PC-9 (cell line): ENCODE measurements at regions of chr5 and their contacts with region 1.

Region 1: DNA sequence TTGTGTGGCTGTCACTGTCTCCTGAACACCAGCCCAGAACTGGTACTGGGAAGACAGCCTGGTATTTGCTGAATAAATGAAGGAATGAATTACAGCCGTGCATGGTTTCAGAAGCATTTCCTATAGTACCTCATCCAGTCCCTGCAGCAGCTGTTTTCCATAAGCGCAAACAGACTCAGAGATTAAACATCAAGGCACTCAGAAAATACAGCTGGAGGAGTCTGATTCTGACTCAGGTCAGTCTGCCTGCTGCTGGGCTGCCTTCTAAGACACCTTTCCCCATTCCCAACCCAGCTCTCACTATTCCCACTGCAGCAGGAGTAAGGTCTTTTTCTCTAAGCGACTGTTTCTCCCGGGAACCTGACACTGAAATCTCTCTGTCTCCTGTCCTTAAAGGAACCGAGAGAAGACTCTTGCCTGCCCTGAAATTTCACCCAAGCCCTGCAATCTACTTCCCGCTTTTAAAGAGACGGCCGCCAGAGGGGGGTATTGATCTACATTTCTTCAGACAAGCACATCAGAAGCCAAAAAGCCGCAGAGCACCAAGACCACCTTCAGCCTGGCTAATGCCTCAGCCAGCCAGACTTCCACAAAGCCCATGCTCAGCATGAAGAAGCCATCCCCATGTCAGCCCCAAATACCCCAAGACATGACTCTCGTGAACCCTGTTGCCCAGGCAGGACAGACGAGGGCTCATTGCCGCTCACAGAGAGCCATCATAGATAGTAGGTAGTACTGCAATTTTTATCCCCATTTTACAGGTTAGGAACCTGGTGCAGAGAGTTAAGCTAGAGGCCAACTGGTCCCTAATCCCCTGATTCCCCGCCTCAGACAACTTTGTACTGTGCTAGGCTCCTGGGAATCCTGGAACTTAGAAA is 5.4 kb upstream of the FOXI1 start:
- DNase-seq: peak; percentile 69 to 81
- H3K4me3 ChIP-seq: no peak overlapping the region
- H3K27ac ChIP-seq: peak overlapping the region; percentile 31; the same call in 1 of the 2 replicates
- H3K4me1 ChIP-seq: peaks cover 41% of the 10 kb centered on the region
- H3K27me3 ChIP-seq: no peaks in the 10 kb centered on the region
- CTCF ChIP-seq: peak; percentile 93

Region 2: DNA sequence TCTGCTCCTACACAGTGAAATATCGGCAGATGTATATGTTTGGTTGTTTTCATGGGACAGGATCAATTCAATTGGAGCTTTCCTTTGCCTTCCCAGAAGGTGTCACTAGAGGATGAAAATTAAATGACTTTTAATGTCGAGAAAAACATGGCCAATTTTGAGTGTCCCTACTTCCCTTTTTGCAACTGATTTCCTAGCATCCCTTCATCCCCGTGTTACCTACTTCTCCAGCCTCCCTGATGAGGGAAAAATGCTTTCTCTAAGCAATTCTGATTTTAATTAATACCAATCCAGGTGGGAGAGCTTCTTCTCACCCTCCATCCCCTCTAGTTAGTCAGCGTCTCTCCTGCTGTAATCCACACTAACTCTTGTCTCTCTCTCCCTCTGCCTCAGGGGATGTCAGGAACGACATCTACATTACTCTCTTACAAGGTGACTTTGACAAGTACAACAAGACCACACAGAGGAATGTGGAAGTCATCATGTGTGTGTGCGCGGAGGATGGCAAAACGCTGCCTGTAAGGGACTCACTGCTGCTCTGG is 398.3 kb before region 1 on chr5:
- CTCF ChIA-PET with region 1: no interaction called
- POLR2A ChIA-PET with region 1: no interaction called
- intact Hi-C with region 1: loop called (anchors 5 kb)
- DNase-seq: peak in 1 of 2 experiments; percentile 56
- H3K4me3 ChIP-seq: no peak overlapping the region
- H3K27ac ChIP-seq: no peak overlapping the region
- H3K4me1 ChIP-seq: peaks cover 11% of the 10 kb centered on the region
- H3K27me3 ChIP-seq: no peaks in the 10 kb centered on the region
- CTCF ChIP-seq: peak; percentile 65; the same call in 1 of the 2 replicates

Region 3: DNA sequence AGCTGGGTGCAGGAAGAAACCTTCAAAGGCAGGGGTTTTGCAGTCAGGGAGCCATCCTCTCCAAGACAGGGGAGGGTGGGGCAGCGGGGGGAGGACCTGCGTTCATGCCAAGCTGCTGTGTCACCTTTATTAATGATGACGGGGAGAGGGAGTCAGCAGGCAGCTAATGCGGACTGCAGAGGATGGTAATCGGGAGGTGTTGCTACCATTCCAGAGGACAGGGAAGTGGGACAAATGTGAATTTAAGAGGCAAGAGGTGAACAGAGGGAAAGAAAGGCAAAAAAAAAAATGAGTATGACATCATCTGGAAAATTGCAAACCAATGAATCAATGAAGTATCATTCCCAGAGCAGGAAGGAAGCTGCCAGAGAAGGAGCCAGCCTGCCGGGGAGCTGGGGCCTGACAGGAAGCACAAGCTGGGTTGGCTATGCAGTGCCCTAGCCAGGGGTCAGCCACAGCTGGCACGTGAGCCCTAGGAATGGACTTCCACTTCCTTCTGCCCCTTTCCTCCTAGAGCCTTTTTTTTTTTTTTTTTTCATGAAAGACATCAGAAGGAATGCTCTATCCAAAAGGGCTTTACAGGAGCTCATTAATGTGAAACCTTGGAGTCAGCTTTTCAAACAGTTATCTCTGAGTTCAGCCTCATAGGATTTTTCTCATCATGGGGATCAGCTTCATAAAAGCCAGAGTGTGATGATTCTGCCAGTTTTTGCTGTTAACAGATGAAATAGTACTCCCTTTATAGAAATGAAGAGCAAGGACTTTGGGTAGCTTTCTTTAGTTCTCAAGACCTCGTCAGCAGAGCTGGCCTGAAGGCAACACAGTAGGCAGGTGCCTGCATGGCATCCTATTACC is 129.2 kb before region 1 on chr5:
- CTCF ChIA-PET with region 1: no interaction called
- POLR2A ChIA-PET with region 1: no interaction called
- intact Hi-C with region 1: loop called (anchors 5 kb)
- DNase-seq: peak; percentile 76 to 98
- H3K4me3 ChIP-seq: no peak overlapping the region
- H3K27ac ChIP-seq: peak overlapping the region; percentile 88
- H3K4me1 ChIP-seq: peaks cover 29% of the 10 kb centered on the region
- H3K27me3 ChIP-seq: no peaks in the 10 kb centered on the region
- CTCF ChIP-seq: no peak

Region 4: GRCh38 chr5:170080217-170080616 is 20.1 kb before region 1 on chr5:
- CTCF ChIA-PET with region 1: no interaction called
- POLR2A ChIA-PET with region 1: no interaction called
- intact Hi-C with region 1: no loop called
- DNase-seq: no peak
- H3K4me3 ChIP-seq: no peak overlapping the region
- H3K27ac ChIP-seq: no peak overlapping the region
- H3K4me1 ChIP-seq: no peaks in the 10 kb centered on the region
- H3K27me3 ChIP-seq: no peaks in the 10 kb centered on the region
- CTCF ChIP-seq: no peak

Region 5: DNA sequence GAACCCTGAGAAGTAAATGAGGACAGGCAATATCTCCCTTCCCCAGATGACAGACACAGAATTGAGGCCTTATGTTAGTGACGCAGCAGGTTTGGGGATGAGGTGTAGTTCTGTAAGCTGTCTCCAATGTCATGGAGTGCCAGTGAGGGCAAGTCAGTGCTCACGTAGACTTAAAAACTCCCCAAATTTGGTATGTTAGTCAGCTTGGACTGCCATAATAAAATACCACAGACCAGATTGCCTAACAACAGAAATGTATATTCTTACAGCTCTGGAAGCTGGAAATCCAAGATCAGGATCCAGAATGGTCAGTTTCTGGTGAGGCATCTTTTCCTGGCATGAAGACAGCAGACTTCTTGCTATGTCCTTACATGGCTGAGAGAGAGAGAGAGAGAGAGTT is 20.3 kb after region 1 on chr5:
- CTCF ChIA-PET with region 1: no interaction called
- POLR2A ChIA-PET with region 1: no interaction called
- intact Hi-C with region 1: no loop called
- DNase-seq: peak; percentile 18 to 76
- H3K4me3 ChIP-seq: no peak overlapping the region
- H3K27ac ChIP-seq: peak overlapping the region; percentile 66
- H3K4me1 ChIP-seq: peaks cover 23% of the 10 kb centered on the region
- H3K27me3 ChIP-seq: no peaks in the 10 kb centered on the region
- CTCF ChIP-seq: no peak

Region 6: DNA sequence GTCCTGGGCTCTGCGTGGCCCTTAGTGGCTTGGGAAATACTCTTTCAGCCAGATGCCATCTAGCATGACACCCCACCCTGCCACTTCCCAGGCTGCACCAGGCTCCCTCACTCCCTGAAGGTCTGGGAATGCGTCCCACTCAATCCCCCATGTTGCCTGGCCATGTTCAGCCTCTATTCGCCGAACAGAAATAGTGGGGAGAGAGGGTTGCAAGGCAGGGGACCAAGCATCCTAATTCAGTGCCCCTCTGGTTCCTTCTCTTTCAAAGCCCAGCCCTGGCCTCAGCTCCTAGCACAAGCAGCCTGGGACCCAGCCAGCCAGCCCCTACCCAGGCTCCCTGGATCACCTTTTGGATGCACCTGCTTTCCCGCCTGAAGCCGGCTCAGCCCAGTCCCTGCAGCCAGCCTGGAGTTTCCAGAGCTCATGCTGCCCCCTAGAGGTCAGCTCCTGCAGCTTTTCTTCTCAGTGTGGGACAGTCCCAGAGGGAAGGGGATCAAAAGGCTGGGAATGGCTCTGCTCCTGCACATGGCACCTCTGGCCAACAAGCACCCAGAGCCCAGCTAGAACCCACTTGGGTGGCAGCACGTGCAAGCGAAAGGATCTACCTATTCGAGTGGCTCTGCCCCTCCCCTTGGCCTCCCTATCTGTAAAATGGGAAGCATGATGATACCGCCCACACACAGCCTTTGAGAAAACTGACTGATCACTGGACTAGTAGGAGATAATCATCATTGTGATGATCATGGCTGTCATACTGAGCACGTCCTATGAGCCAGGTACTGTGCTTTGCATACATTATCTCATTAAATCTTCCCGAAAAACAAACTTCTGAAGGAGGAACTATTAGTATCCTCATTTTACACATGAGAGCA is 83.7 kb after region 1 on chr5:
- CTCF ChIA-PET with region 1: interaction called, 5 read pairs
- POLR2A ChIA-PET with region 1: no interaction called
- intact Hi-C with region 1: loop called (anchors 1 kb)
- DNase-seq: peak in 1 of 2 experiments; percentile 80
- H3K4me3 ChIP-seq: no peak overlapping the region
- H3K27ac ChIP-seq: no peak overlapping the region
- H3K4me1 ChIP-seq: peaks cover 21% of the 10 kb centered on the region
- H3K27me3 ChIP-seq: no peaks in the 10 kb centered on the region
- CTCF ChIP-seq: peak; percentile 93

Region 7: DNA sequence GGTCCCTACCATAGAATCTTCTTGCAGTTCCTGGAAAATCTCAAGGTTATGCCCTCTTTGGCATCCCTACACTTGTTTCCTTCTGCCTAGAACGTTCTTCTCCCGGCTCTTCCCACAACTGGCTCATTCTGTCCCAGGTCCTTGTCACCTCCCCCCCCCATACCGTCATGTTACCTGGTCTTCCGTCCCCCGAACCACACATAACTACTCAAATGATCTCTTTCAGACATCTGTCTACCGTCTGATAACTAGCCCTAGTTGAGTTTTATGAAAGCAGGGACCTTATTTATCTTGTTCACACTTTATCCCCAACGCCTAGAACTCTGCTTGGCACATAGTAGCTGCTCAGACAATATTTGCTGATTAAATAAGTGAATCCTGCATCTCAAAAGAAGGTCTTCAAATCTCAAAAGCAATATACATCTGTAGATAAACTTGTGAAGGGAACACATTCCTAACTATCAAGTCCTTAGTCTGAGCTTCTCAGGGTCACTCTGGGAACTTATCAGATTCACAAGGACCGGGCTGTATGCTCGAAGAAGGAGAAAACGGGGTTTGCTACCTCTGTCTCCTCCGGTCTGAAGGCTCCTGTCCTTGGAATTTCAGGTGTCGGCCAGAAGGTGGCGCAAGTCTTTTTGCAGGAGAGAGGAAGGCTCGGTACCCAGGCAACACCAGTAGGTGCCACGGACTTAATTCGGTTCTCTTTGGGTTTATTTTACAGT is 167.3 kb after region 1 on chr5:
- CTCF ChIA-PET with region 1: no interaction called
- POLR2A ChIA-PET with region 1: no interaction called
- intact Hi-C with region 1: loop called (anchors 5 kb)
- DNase-seq: peak; percentile 45 to 52
- H3K4me3 ChIP-seq: peak overlapping the region; percentile 50; the same call in 1 of the 2 replicates
- H3K27ac ChIP-seq: no peak overlapping the region
- H3K4me1 ChIP-seq: no peaks in the 10 kb centered on the region
- H3K27me3 ChIP-seq: peaks cover 24% of the 10 kb centered on the region; the same call in 1 of the 2 replicates
- CTCF ChIP-seq: peak; percentile 90

Region 8: DNA sequence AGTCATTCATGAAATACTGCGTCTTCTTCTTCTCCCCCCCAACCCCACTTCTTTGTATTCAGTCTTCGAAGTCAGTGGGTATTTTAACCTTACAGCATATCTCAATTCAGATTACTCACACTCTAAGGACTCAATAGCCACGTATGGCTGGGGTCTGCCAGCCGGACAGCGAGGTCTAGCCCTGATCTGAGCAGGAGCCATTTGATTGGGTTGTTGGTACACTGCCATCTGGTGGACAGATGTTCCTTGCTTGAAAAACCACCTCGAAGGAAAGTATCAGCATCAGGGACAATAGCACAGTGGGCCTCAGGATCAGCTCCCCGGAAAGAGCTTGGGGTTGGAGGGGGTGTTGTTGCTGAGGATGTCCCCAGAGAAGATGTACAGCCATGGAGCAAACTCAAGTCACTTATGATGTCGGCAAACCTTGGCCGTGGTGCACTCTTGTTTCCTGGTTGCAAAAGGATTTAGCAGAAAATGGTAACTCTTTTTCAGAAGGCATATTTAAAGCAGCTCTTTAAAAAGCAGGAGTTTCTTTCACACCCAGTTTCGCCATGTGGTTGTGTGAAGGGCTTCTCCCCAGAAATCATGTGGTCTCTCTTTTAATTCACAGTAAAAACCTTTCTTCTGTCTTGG is 320.6 kb after region 1 on chr5:
- CTCF ChIA-PET with region 1: no interaction called
- POLR2A ChIA-PET with region 1: no interaction called
- intact Hi-C with region 1: loop called (anchors 1 kb)
- DNase-seq: peak; percentile 27 to 46
- H3K4me3 ChIP-seq: no peak overlapping the region
- H3K27ac ChIP-seq: no peak overlapping the region
- H3K4me1 ChIP-seq: no peaks in the 10 kb centered on the region
- H3K27me3 ChIP-seq: peaks cover 4% of the 10 kb centered on the region; the same call in 1 of the 2 replicates
- CTCF ChIP-seq: peak; percentile 85

Region 9: DNA sequence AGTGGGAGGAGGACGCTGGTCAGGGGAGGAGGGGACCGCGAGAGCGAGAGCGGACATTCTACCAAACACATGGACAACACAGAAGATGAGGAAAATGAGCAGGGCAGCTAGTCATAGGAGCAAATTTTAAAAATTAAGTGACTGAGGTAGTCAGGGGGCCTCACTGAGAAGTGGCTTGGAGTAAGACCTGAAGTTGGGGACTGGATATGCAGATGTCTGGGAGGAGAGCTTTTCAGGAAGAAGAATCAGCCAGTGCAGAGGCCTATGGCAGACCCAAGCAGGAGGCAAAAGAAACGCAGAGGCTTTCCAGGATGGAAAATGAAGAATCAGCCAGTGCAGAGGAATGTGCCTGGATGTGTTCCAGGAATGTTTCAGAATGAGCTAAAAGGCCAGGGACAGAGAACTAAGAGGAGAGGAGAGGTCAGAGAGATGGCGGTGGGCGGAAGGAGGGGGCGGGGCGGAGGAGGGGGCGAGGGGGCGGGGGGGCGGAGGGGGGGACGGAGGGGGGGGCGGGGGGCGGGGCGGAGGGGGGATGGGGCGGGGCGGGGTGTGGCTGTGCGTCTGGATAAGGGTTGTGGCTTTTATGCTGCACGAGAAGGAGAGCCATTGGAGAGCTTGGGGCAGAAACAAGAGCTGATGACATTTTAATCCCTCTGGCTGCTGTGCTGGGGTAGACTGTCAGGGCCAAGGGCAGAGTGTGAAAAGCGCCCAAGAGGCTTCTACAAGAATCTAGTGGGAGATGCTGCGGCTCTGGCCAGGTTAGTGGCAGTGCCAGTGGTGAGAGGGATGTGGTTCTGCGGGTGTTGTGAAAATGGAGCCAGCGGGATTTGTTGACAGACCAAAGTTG is 533.2 kb after region 1 on chr5:
- CTCF ChIA-PET with region 1: no interaction called
- POLR2A ChIA-PET with region 1: no interaction called
- intact Hi-C with region 1: loop called (anchors 5 kb)
- DNase-seq: peak; percentile 61 to 76
- H3K4me3 ChIP-seq: peak overlapping the region; percentile 55
- H3K27ac ChIP-seq: peak overlapping the region; percentile 60
- H3K4me1 ChIP-seq: peaks cover 11% of the 10 kb centered on the region
- H3K27me3 ChIP-seq: no peaks in the 10 kb centered on the region
- CTCF ChIP-seq: peak; percentile 42; the same call in 1 of the 2 replicates